SK-N-SH (cell line): ENCODE measurements at regions of chr19 and their contacts with region 1.

Region 1: GRCh38 chr19:1789261-1790041 is 22.6 kb downstream of the ATP8B3 start:
- DNase-seq: peak; percentile 67
- H3K4me3 ChIP-seq: no peak overlapping the region; a peak in 1 of 4 replicates
- H3K27ac ChIP-seq: no peak overlapping the region
- H3K4me1 ChIP-seq: no peaks in the 10 kb centered on the region; a peak in 1 of 4 replicates
- H3K27me3 ChIP-seq: peaks cover 23% of the 10 kb centered on the region
- CTCF ChIP-seq: no peak
- EP300 ChIP-seq: no peak
- RAD21 ChIP-seq: no peak

Region 2: GRCh38 chr19:1774999-1775772 is 14.3 kb before region 1 on chr19:
- CTCF ChIA-PET with region 1: interaction called, 143 read pairs
- POLR2A ChIA-PET with region 1: no interaction called
- DNase-seq: peak; percentile 72
- H3K4me3 ChIP-seq: no peak overlapping the region; a peak in 1 of 4 replicates
- H3K27ac ChIP-seq: no peak overlapping the region
- H3K4me1 ChIP-seq: no peaks in the 10 kb centered on the region
- H3K27me3 ChIP-seq: peaks cover 73% of the 10 kb centered on the region
- CTCF ChIP-seq: peak; percentile 50
- EP300 ChIP-seq: no peak
- RAD21 ChIP-seq: no peak

Region 3: DNA sequence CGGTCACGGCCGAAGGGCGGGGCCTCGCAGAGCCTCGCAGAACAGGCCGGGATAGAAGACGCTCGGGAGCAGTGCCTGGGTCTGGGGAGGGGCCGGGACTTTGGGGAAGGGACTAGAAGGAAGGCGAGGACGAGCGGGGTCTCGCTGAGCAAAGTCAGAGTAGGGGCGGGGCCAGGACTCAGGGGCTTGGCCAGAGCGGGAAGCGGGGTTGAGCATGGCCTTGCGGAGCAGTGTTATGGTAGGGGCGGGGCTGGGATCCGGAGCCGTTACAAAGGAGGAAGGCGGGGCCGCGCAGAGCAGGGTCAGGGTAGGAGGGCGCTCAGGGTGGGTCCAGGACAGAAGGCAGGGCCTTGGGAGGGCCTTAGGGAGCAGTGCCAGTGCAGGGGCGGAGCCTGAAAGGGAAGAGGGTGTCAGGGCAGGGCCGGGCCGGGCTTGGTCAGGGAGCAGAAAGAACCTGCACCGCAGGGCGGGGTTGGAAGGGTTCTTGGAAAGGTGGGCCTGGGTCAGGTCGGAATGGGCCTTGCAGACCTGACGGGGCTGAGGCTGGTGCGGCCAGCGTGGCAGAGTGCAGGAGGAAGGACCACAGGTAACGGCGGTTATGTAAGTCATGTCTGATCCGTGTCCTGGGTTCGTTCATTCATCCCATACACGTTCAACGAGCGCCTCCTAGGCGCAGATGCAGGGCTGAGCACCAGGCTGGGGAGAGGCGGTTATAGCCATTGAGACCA is 23.2 kb after region 1 on chr19:
- CTCF ChIA-PET with region 1: interaction called, 20 read pairs
- POLR2A ChIA-PET with region 1: no interaction called
- DNase-seq: peak; percentile 96
- H3K4me3 ChIP-seq: peak overlapping the region; percentile 54 to 71
- H3K27ac ChIP-seq: peak overlapping the region; percentile 69 to 72
- H3K4me1 ChIP-seq: peaks cover 0 to 14% of the 10 kb centered on the region in 2 experiments; a peak in 1 of 4 replicates
- H3K27me3 ChIP-seq: no peaks in the 10 kb centered on the region
- CTCF ChIP-seq: peak; percentile 69
- EP300 ChIP-seq: no peak
- RAD21 ChIP-seq: peak; percentile 78

Region 4: DNA sequence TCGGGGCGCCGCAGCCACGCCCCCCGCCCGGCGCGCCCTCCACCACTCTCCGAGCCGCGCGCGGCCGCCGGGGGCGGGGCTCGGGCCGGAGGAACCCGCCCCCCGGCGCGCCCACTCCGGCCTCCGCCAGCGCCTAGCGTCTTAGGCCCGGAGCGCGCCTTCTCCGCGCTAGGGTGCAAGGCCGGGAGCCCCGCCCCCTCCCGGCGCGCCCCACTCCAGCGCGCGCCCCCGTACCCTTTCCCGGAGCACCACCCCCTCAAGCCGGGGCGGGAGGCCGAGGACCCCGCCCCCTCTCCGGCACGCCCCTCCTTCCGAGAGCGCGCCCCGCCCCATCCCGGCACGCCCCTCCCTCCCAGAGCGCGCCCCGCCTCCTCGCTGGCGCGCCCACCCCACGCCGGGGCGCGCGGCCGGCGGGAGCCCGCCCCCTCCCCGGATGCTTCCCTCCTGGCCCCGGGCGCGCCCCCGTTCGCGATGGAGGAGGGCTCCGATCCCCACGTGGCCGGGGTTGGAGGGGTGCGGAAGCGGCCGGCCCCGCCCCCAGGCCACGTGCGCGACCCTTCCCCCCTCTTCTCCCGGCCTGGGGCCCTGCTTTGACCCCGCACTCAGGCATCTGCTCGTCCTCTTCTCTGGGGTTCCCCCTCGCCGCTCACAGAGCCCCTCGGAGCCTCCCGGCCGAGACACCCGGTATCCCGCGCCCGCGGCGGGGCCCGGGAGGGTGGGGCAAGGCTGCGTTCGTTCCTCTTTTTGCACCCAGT is 74.5 kb after region 1 on chr19:
- CTCF ChIA-PET with region 1: no interaction called
- POLR2A ChIA-PET with region 1: no interaction called
- DNase-seq: peak; percentile 97
- H3K4me3 ChIP-seq: peak overlapping the region; percentile 79 to 90
- H3K27ac ChIP-seq: peak overlapping the region; percentile 93 to 94
- H3K4me1 ChIP-seq: peaks cover 18 to 36% of the 10 kb centered on the region in 2 experiments; a peak in 2 of 4 replicates
- H3K27me3 ChIP-seq: no peaks in the 10 kb centered on the region
- CTCF ChIP-seq: no peak
- EP300 ChIP-seq: no peak
- RAD21 ChIP-seq: no peak